Ovary (tissue), 10 donors: ENCODE measurements at regions of chr6 and their contacts with region 1.

Region 1: GRCh38 chr6:71333697-71334096 is 45.1 kb downstream of the OGFRL1 start:
- DNase-seq: no peak
- H3K4me3 ChIP-seq: no peak overlapping the region
- H3K27ac ChIP-seq: no peak overlapping the region
- H3K4me1 ChIP-seq: no peaks in the 10 kb centered on the region
- H3K27me3 ChIP-seq: no peaks in the 10 kb centered on the region
- CTCF ChIP-seq: no peak
- EP300 ChIP-seq: no peak
- POLR2A ChIP-seq: no peak

Region 2: GRCh38 chr6:70210462-70210861 is 1123.2 kb before region 1 on chr6:
- intact Hi-C with region 1: loop called in 1 of 4 experiments (anchors 10 kb)
- DNase-seq: no peak
- H3K4me3 ChIP-seq: no peak overlapping the region
- H3K27ac ChIP-seq: no peak overlapping the region
- H3K4me1 ChIP-seq: no peaks in the 10 kb centered on the region
- H3K27me3 ChIP-seq: no peaks in the 10 kb centered on the region
- CTCF ChIP-seq: no peak
- EP300 ChIP-seq: no peak
- POLR2A ChIP-seq: no peak

Region 3: DNA sequence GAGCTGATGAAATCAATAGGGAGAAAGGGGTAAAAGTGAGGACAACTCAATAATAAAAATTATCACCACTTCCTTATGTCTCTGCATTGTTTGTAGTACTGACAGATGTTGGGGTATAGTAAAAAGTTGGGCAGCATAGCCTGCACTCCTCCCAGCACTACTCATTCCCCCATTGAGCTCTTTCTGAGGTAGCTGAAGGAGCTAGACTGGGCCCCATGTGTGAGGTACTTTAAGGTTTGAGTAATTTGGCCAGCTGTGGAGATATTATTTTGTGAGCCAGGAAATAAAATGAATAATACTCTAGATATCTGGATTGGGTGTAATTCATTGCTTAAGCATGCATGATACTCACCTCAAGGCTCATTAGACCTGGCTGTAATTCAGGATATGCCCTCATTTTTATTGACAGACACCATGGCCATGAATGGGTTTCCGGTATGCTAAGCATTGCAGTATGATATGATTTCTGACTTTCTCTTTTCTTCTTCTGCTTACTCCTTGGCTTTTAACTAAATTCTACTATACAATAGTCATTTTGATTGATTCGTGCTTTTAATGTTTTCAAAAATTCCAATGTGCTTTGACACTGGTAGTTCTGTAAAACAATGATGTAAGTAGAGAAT is 268.8 kb after region 1 on chr6:
- intact Hi-C with region 1: no loop called
- DNase-seq: no peak
- H3K4me3 ChIP-seq: no peak overlapping the region
- H3K27ac ChIP-seq: no peak overlapping the region
- H3K4me1 ChIP-seq: no peaks in the 10 kb centered on the region
- H3K27me3 ChIP-seq: no peaks in the 10 kb centered on the region
- CTCF ChIP-seq: no peak
- EP300 ChIP-seq: no peak
- POLR2A ChIP-seq: no peak